ENCODE measurements at regions of chr2 and their contacts with region 1.

Region 1: GRCh38 chr2:101308432-101309210 is at the start of gene RNF149:
- DNase-seq: peak; percentile 61
- ATAC-seq: peak; percentile 82
- H3K4me3 ChIP-seq: peak within 1 kb of the TSS; percentile 71
- H3K27ac ChIP-seq: peak within 1 kb of the TSS; percentile 41
- H3K4me1 ChIP-seq: peaks cover 24% of the 10 kb centered on the region
- H3K27me3 ChIP-seq: no peaks in the 10 kb centered on the region
- CTCF ChIP-seq: no peak
- EP300 ChIP-seq: 0 out of 4 replicates have a peak, but pooled peaks of 1 of the 2 experiments have one; percentile 5
- POLR2A ChIP-seq: peak; percentile 93
- RAD21 ChIP-seq: no peak
- polyA plus RNA-seq, gene RNF149: 5.2 to 7.7 TPM

Region 2: DNA sequence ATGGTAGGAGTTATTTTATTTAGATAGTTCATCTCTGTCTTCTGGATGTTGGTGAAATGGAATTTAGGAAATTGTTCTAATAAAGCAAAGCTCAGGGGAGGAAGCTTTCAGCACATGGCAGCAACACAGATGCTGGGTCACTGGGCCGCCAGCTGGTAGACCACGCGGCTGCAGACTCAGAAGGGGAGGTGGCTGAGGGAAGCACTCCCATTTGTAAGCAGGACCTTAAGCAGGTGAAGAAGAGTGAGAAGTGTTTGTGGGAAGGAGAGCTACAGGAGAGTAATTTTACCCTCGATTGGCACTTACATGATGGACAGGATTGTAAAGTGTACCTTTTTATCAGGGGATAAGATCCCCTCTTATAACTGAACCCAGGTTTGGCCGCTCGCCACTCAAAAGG is 813.9 kb before region 1 on chr2:
- CTCF ChIA-PET with region 1: no interaction called
- POLR2A ChIA-PET with region 1: no interaction called
- RAD21 ChIA-PET with region 1: no interaction called
- SMC1A ChIA-PET with region 1: no interaction called
- in situ Hi-C with region 1: no loop called
- intact Hi-C with region 1: no loop called
- DNase-seq: no peak
- ATAC-seq: no peak
- H3K4me3 ChIP-seq: no peak overlapping the region
- H3K27ac ChIP-seq: no peak overlapping the region
- H3K4me1 ChIP-seq: no peaks in the 10 kb centered on the region
- H3K27me3 ChIP-seq: no peaks in the 10 kb centered on the region; a peak in 1 of 4 replicates
- CTCF ChIP-seq: no peak
- EP300 ChIP-seq: no peak
- POLR2A ChIP-seq: no peak
- RAD21 ChIP-seq: no peak

Region 3: DNA sequence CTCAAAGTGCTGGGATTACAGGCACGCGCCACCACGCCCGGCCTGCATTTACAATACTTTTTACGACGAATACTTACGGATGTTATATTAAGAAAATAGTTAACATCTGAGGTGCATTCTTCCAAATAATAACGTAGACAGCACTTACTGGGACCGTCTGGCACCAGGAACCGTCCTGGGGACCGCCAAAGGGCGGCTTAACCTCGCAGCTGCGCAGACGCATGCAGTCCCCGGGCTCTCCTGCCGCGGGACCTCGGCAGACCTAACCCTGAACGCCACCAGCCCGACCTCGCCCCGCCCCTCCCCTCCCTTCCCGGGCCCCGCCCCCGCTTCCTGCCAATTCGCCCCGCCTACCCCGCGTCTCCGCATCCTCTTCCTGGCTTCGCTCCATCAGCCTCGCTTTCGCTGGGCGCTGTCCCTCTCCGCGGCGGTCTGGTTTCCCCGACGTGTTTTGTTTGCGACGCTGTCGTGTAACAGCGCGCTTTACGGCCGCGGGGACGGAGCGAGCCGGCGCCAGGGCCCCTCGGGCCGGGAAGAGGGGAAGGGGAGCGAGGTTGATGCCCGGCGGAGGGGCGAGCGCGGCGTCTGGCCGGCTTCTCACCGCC is 56.1 kb before region 1 on chr2 and contains the start of gene CNOT11:
- CTCF ChIA-PET with region 1: interaction called, 3 read pairs
- POLR2A ChIA-PET with region 1: interaction called, 10 read pairs
- RAD21 ChIA-PET with region 1: interaction called, 6 read pairs
- SMC1A ChIA-PET with region 1: interaction called, 10 read pairs
- in situ Hi-C with region 1: no loop called
- intact Hi-C with region 1: loop called (anchors 1 kb)
- DNase-seq: peak; percentile 93
- ATAC-seq: peak; percentile 92
- H3K4me3 ChIP-seq: peak within 1 kb of the TSS; percentile 81
- H3K27ac ChIP-seq: peak within 1 kb of the TSS; percentile 92
- H3K4me1 ChIP-seq: peaks cover 7% of the 10 kb centered on the region
- H3K27me3 ChIP-seq: no peaks in the 10 kb centered on the region
- CTCF ChIP-seq: no peak
- EP300 ChIP-seq: no peak
- POLR2A ChIP-seq: peak; percentile 85
- RAD21 ChIP-seq: no peak
- polyA plus RNA-seq, gene CNOT11: 10.8 to 15.7 TPM

Region 4: DNA sequence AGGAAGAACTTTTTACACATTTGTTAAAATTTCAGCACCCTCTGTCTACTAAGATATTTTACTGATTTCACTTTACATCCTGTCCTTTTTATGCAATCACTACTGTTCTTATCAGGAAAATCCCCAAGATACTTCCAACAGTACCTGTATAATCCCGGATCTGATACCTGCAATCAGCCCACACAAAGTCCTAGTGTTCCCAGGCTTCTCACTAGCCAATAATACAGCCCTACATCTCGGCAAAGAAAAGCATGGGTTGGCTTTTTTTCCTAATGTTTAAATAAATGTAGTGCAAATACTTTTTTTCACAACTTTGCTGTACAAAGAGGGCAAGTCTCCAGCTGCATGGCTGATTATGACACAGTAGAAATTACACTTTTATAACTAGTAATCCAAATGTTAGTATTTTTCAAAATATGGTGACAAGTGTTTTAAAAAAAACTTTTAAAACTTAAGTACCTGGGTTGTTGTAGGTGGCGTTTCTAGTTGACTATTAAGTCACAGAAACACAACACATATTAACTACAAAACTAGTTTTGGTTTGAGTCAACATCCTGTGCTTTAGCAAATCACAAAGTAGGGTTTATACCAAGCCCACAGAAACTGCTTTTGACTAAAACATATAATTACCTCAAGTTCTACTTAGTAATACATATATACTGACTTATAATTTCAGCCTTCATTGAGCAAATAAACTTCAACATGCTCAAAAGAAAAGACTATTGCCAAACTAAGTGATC is 36.4 kb before region 1 on chr2:
- CTCF ChIA-PET with region 1: no interaction called
- POLR2A ChIA-PET with region 1: interaction called, 6 read pairs
- RAD21 ChIA-PET with region 1: interaction called, 4 read pairs
- SMC1A ChIA-PET with region 1: interaction called, 7 read pairs
- in situ Hi-C with region 1: no loop called
- intact Hi-C with region 1: loop called (anchors 5 kb)
- DNase-seq: peak; percentile 73
- ATAC-seq: peak; percentile 93
- H3K4me3 ChIP-seq: no peak overlapping the region
- H3K27ac ChIP-seq: peak overlapping the region; percentile 50; the same call in 1 of the 2 replicates
- H3K4me1 ChIP-seq: peaks cover 13% of the 10 kb centered on the region
- H3K27me3 ChIP-seq: no peaks in the 10 kb centered on the region
- CTCF ChIP-seq: no peak
- EP300 ChIP-seq: peak; percentile 46 to 74; a peak in 2 of 4 replicates
- POLR2A ChIP-seq: no peak
- RAD21 ChIP-seq: no peak